Activated naive CD4-positive, alpha-beta T cell treated with anti-CD3 and anti-CD28 coated beads for 36 hours (primary cell): ENCODE measurements at regions of chr2 and their contacts with region 1.

Region 1: GRCh38 chr2:25376750-25377621 is 35.3 kb upstream of the DNMT3A start:
- DNase-seq: peak; percentile 96
- H3K4me3 Mint-ChIP-seq: peak overlapping the region; percentile 64
- H3K27ac Mint-ChIP-seq: peak overlapping the region; percentile 96
- H3K4me1 Mint-ChIP-seq: peaks cover 28% of the 10 kb centered on the region
- H3K27me3 Mint-ChIP-seq: no peaks in the 10 kb centered on the region

Region 2: DNA sequence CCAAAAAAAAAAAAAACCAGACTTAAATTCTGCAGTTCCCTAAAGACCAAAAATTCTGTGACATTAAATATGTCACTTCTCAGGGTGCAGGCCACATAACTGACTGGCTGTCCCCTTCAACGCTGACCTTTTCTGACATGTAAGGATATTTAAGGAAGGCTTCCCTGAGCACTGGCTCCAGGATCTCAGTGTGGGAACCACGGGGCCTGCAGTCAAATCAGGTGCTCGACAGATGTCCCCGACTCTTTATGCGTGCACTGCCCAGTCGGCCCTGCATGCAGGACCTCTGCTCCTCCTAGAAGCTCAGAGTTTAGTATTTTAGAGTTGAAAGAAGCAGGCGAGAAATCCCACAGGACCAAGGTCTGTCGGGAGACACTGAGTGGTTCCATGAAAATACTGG is 139.2 kb before region 1 on chr2:
- CTCF ChIA-PET with region 1: no interaction called
- intact Hi-C with region 1: no loop called
- DNase-seq: no peak
- H3K4me3 Mint-ChIP-seq: no peak overlapping the region
- H3K27ac Mint-ChIP-seq: no peak overlapping the region
- H3K4me1 Mint-ChIP-seq: no peaks in the 10 kb centered on the region
- H3K27me3 Mint-ChIP-seq: no peaks in the 10 kb centered on the region

Region 3: DNA sequence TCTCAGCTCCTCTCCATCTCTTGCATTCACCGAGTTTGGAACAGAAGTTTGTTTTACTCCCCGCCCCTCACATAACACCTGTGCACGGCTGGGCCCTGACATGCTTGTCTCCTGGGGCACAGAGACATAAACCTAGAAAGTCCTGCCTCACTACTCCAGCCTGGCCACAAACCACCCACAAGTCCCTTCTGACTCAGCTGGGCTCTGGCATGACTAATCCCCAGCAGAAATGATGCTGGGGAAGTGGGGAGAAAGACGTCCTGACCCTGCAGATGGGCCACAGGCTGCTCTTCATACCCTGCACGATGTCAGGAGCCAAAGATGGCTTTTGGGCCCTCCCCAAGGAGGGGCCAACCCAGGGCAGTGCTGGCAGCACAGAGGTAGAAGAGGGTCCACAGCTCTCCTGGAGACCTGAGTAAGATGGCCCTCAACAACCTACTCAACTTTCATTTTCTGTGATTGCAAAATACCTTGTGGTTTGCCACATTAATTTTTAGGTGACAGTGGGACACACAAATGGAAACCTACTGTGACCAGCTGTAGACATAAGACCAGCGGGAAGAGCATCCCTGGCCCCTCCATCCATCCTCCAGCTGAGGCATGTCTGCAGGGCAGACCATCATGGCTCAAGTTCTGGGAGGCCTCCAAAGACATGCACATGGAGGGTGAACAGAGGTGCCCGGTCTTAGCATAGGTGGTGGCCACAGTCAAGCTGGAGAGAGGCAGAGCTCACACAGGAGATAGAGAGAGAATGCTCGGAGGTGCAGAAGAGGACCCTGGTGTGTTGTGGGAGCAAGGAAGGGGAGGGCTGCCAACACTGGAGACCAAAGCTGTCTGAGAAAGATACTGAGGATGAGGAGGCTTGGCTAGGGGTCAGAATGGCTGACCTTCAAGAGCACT is 75.3 kb before region 1 on chr2:
- CTCF ChIA-PET with region 1: interaction called, 11 read pairs
- intact Hi-C with region 1: no loop called
- DNase-seq: peak; percentile 89
- H3K4me3 Mint-ChIP-seq: no peak overlapping the region
- H3K27ac Mint-ChIP-seq: peak overlapping the region; percentile 25
- H3K4me1 Mint-ChIP-seq: peaks cover 66% of the 10 kb centered on the region
- H3K27me3 Mint-ChIP-seq: no peaks in the 10 kb centered on the region

Region 4: DNA sequence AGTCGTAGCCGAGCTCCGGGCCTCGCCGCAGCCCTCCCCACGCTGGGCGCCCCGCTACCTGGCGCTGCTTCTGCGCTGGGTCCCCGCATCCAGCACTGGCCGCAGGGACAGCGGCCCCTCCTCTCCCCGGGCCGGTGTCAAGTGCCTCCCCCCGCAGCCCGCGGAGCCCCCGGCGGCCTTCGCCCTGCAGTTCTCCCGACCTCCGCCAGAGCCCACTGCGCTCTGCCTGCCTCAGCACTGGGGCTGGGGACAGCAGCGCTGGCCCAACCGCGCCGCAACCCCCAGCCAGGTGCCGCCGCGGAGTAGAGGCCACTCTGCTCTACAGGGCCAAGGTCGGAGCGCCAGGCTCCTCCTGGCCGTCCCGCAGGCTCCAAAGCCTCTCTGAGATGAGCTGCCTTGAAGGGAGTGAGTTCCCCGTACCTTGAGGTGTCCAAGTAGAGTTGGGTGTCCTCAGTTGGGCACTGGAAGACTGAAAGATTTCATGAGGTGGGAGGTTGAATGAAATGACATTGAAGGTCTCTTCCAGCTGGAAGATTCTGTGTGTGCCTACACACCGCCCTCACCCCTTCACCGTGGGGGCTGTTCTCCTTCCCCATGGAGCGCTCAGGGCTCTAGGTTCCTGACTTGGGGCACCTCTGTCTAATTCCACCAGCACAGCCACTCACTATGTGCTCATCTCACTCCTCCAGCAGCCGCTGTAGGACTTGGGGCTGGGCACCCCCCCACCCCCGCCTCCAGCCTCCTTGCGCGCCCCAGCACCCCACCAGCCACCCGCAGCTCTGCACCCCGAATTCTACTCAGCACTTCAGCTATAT is 34.4 kb before region 1 on chr2:
- CTCF ChIA-PET with region 1: interaction called, 7 read pairs
- intact Hi-C with region 1: loop called (anchors 1 kb)
- DNase-seq: peak; percentile 82
- H3K4me3 Mint-ChIP-seq: peak overlapping the region; percentile 80
- H3K27ac Mint-ChIP-seq: peak overlapping the region; percentile 71
- H3K4me1 Mint-ChIP-seq: peaks cover 37% of the 10 kb centered on the region
- H3K27me3 Mint-ChIP-seq: no peaks in the 10 kb centered on the region

Region 5: GRCh38 chr2:25453199-25453905 is 76.4 kb after region 1 on chr2:
- CTCF ChIA-PET with region 1: interaction called, 11 read pairs
- intact Hi-C with region 1: loop called (anchors 1 kb)
- DNase-seq: peak; percentile 73
- H3K4me3 Mint-ChIP-seq: peak overlapping the region; percentile 6
- H3K27ac Mint-ChIP-seq: peak overlapping the region; percentile 90
- H3K4me1 Mint-ChIP-seq: peaks cover 29% of the 10 kb centered on the region
- H3K27me3 Mint-ChIP-seq: no peaks in the 10 kb centered on the region

Region 6: DNA sequence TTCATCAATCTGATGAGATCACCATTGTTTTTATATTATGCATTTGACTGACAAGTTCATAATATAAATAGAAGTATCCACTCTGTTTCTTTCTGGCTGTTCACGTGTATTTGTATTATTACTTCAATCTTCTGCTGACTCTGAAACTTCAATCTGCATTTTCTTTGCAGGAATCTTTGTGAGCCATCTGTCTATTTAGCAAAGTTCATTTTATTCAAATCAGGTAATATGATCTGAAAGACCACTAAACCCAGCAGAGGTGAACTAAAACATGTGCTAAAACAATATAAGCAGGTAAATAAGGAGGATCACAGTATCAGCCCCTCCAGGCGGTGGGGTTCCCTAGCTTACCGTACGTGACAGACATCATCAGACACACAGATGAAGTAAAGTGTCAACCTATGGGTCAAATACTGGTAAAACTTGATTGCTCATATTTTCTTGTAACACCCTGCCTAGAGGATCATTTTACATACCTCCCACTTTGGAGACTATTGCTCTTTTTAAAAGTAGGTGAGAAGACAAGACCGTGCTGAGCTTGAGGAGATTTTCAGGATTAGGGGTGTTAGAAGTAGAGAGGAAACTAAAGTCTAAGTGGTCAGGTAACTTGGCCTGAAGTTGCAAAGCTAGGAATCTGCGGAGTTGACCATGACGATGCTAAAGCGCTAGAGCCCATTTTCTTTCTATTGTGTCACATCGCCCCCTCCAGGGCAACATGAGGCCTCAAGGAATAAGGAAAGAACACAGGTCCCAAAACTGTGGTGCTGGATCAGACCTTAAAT is 287.4 kb after region 1 on chr2:
- CTCF ChIA-PET with region 1: interaction called, 3 read pairs
- intact Hi-C with region 1: loop called (anchors 1 kb)
- DNase-seq: peak; percentile 64
- H3K4me3 Mint-ChIP-seq: peak overlapping the region; percentile 36
- H3K27ac Mint-ChIP-seq: no peak overlapping the region
- H3K4me1 Mint-ChIP-seq: peaks cover 21% of the 10 kb centered on the region
- H3K27me3 Mint-ChIP-seq: no peaks in the 10 kb centered on the region